OCI-LY7 (cell line): ENCODE measurements at regions of chr6 and their contacts with region 1.

Region 1: GRCh38 chr6:67606903-67607828 is 1027.9 kb upstream of the ADGRB3 start:
- DNase-seq: no peak
- H3K4me3 ChIP-seq: no peak overlapping the region
- H3K27ac ChIP-seq: no peak overlapping the region
- H3K4me1 ChIP-seq: no peaks in the 10 kb centered on the region
- CTCF ChIP-seq: no peak

Region 2: DNA sequence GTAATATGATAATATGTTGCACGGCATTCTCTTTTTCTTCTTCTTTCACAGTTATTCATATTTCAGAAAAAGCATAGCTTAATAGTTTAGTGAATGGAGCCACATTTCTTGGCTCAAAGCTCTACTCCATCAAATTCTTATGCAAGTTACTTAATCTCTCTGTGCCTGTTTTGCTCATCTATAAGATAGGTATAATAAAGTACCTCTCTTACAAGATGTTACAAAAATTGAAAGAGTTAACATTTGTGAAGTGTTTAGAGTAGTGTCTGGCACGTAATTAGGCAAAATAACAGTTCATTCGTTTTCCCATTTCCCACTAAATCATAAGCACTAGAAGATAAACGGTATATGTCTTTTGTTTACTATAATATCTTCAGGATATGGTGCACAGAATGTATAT is 595.7 kb before region 1 on chr6:
- CTCF ChIA-PET with region 1: no interaction called
- POLR2A ChIA-PET with region 1: no interaction called
- intact Hi-C with region 1: no loop called
- DNase-seq: no peak
- H3K4me3 ChIP-seq: no peak overlapping the region
- H3K27ac ChIP-seq: no peak overlapping the region
- H3K4me1 ChIP-seq: no peaks in the 10 kb centered on the region
- CTCF ChIP-seq: no peak

Region 3: GRCh38 chr6:67594366-67594765 is 12.8 kb before region 1 on chr6:
- CTCF ChIA-PET with region 1: no interaction called
- POLR2A ChIA-PET with region 1: interaction called, 14 read pairs
- intact Hi-C with region 1: no loop called
- DNase-seq: no peak
- H3K4me3 ChIP-seq: no peak overlapping the region
- H3K27ac ChIP-seq: no peak overlapping the region
- H3K4me1 ChIP-seq: no peaks in the 10 kb centered on the region
- CTCF ChIP-seq: no peak